BJ (cell line): ENCODE measurements at regions of chr12 and their contacts with region 1.

Region 1: GRCh38 chr12:27523642-27524493 is at the start of gene PPFIBP1:
- DNase-seq: peak; percentile 95
- H3K4me3 ChIP-seq: peak within 1 kb of the TSS; percentile 88
- H3K27me3 ChIP-seq: no peaks in the 10 kb centered on the region
- CTCF ChIP-seq: peak; percentile 43
- polyA plus RNA-seq, gene PPFIBP1: 47.5 and 67.4 TPM in 2 replicates

Region 2: DNA sequence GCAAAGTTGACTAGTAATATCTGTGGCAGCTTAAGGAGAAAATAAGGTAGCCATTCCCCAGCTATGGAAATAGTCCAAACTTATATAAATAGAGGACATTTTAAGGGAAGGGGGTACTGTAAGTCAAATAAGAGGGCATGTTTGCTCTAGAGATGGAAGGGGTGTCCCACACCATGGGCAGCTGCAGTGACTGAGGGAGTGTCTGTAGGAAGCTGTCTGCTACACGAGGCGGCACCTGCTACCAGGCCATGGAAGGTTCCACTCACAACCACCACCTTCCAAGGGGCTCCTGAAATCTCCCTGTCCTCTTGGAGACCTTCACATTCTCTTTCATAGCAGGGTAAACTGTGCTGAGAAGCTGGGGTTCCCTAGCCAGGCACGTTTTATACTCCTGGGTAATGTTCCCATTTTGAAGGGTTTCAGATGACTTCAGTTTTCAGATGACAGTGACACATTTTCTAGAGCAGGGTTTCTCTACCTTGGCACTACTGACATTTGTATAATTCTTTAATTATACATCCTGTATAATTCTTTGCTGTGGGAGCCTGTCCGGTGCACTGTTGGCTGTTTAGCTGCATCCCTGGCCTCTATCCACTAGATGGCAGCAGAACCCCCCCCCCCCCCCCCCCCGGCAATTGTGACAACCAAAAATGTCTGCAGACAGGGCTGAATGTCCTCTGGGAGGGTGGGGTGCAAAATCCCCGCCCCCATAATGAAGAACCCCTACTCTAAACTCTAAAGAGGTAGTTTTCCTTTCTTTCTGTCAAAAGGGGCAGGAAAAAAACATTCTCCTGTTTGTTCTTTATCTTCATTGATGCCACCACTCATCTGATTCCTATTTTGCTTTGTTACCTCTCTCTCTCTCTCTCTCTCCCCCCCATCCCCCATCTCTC is 88.9 kb before region 1 on chr12:
- CTCF ChIA-PET with region 1: interaction called, 11 read pairs
- POLR2A ChIA-PET with region 1: no interaction called
- DNase-seq: no peak
- H3K4me3 ChIP-seq: no peak overlapping the region
- H3K27me3 ChIP-seq: no peaks in the 10 kb centered on the region
- CTCF ChIP-seq: peak; percentile 60

Region 3: DNA sequence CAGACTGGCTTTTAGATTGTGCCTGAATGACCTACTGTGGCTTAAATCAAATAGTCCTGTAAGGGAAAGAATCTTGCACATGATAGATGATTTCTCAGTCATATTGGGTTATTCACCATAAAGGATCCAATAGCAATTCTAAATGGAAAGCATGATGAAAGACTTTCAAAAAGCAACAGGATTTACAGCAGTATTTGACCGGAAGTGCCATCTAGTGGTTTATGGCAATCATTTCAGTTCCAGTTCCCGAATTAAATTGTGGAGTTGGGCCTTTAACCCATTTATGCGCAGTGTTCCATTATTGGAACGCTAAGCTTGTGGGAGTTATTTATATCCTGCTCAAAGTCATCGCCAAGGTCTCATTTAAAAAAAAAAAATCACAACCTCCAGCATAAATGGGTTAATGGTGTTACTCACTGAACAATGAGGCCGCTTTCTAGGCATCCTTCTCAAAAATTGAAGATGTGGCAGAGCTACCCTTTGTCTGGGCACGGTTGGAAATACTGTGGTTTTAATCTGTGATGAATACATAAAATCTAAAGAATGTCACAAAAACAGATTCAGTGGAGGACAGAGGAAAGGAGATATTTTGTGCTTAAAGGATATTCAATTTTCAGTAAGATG is 111.6 kb after region 1 on chr12:
- CTCF ChIA-PET with region 1: interaction called, 14 read pairs
- POLR2A ChIA-PET with region 1: no interaction called
- DNase-seq: no peak
- H3K4me3 ChIP-seq: no peak overlapping the region
- H3K27me3 ChIP-seq: no peaks in the 10 kb centered on the region
- CTCF ChIP-seq: peak; percentile 62